CD4-positive, alpha-beta memory T cell (primary cell): ENCODE measurements at regions of chr18 and their contacts with region 1.

Region 1: DNA sequence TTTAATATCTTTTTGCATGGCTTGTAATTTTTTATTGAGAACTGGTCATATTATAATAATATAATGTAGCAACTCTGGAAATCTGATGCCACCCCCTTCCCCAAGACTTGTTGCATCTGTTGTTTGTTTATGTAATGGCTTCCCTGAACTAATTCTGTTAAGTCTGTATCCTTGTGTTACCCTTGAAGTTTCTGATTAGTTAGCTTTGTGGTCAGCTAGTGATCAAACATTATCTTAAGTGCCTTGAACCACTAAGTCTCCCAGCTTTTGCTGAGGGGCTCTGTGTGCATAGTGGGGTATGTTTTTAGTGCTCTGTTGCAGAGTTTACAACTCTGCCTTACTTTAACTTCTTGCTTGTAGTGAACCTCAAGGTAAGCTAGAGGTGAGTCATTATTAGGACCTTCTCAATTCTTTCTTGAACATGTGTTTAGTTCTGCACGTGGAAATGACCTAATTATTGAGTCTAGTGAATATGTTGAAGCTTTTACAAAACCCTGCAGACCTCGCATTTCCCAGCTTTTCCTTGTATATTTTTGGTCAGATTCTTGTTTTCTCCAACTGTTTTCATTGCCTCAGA is 24.8 kb downstream of the SMCHD1 start:
- DNase-seq: no peak
- H3K4me3 ChIP-seq: no peak overlapping the region
- H3K4me3 Mint-ChIP-seq: peak overlapping the region in 5 of 8 donors; percentile 3 to 64 (median 39)
- H3K27ac ChIP-seq: no peak overlapping the region
- H3K27ac Mint-ChIP-seq: peak overlapping the region in 5 of 7 donors; percentile 10 to 78 (median 67)
- H3K4me1 ChIP-seq: peaks cover 69% of the 10 kb centered on the region
- H3K4me1 Mint-ChIP-seq: peaks cover 42 to 75% (median 54%) of the 10 kb centered on the region in 4 donors
- H3K27me3 ChIP-seq: no peaks in the 10 kb centered on the region
- H3K27me3 Mint-ChIP-seq: no peaks in the 10 kb centered on the region

Region 2: DNA sequence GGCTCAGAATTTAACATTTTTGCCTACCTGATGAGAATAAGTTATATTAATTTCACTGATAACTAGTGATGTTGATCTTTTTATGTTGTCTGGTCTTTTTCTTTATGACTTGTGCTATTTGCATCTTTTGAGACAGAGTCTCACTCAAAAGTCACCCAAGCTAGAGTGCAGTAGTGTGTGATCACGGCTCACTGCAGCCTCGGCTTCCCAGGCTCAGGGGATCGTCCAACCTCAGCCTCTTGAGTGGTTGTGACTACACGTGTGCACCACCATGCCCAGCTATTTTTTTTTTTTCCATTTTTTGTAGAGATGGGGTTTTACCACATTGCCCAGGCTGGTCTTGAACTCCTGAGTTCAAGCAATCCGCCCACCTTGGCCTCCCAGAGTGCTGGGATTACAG is 17.3 kb before region 1 on chr18:
- CTCF ChIA-PET with region 1: interaction called, 10 read pairs
- POLR2A ChIA-PET with region 1: interaction called, 59 read pairs
- intact Hi-C with region 1: loop called (anchors 2 kb)
- DNase-seq: no peak
- H3K4me3 ChIP-seq: no peak overlapping the region
- H3K4me3 Mint-ChIP-seq: peak overlapping the region; percentile 57 to 83 (median 72)
- H3K27ac ChIP-seq: no peak overlapping the region
- H3K27ac Mint-ChIP-seq: peak overlapping the region in 5 of 7 donors; percentile 53 to 90 (median 83)
- H3K4me1 ChIP-seq: peaks cover 74% of the 10 kb centered on the region
- H3K4me1 Mint-ChIP-seq: peaks cover 49 to 78% (median 65%) of the 10 kb centered on the region in 4 donors
- H3K27me3 ChIP-seq: no peaks in the 10 kb centered on the region
- H3K27me3 Mint-ChIP-seq: no peaks in the 10 kb centered on the region

Region 3: GRCh38 chr18:2723207-2723606 is 42.9 kb after region 1 on chr18:
- CTCF ChIA-PET with region 1: no interaction called
- POLR2A ChIA-PET with region 1: no interaction called
- intact Hi-C with region 1: loop called (anchors 5 kb)
- DNase-seq: no peak
- H3K4me3 ChIP-seq: no peak overlapping the region
- H3K4me3 Mint-ChIP-seq: no peak overlapping the region
- H3K27ac ChIP-seq: no peak overlapping the region
- H3K27ac Mint-ChIP-seq: peak overlapping the region in 4 of 7 donors; percentile 50 to 77 (median 59)
- H3K4me1 ChIP-seq: peaks cover 9% of the 10 kb centered on the region
- H3K4me1 Mint-ChIP-seq: peaks cover 30 to 55% (median 38%) of the 10 kb centered on the region in 4 donors
- H3K27me3 ChIP-seq: no peaks in the 10 kb centered on the region
- H3K27me3 Mint-ChIP-seq: no peaks in the 10 kb centered on the region

Region 4: DNA sequence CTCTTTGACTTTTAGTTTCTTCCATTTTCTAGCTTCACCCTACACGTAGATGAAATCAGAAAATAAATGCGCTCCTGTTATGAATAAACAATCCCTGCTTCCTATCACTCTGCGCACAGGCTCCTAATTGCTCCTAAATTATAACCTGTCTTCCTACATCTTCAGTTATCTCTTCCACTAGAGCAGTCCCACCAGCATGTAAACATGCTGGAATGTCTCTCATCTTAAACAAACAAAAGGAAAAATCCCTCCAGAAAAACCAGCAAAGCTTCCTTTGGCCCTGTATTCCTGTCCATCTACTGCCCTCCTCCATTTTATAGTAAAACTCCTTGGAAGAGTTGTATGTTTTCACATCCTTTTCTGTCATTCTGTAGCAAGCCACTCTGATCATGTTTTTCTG is 61.3 kb after region 1 on chr18:
- CTCF ChIA-PET with region 1: no interaction called
- POLR2A ChIA-PET with region 1: no interaction called
- intact Hi-C with region 1: no loop called
- DNase-seq: no peak
- H3K4me3 ChIP-seq: no peak overlapping the region
- H3K4me3 Mint-ChIP-seq: no peak overlapping the region
- H3K27ac ChIP-seq: no peak overlapping the region
- H3K27ac Mint-ChIP-seq: peak overlapping the region in 6 of 7 donors; percentile 19 to 77 (median 68)
- H3K4me1 ChIP-seq: no peaks in the 10 kb centered on the region
- H3K4me1 Mint-ChIP-seq: peaks cover 8 to 19% (median 11%) of the 10 kb centered on the region in 4 donors
- H3K27me3 ChIP-seq: no peaks in the 10 kb centered on the region
- H3K27me3 Mint-ChIP-seq: no peaks in the 10 kb centered on the region

Region 5: DNA sequence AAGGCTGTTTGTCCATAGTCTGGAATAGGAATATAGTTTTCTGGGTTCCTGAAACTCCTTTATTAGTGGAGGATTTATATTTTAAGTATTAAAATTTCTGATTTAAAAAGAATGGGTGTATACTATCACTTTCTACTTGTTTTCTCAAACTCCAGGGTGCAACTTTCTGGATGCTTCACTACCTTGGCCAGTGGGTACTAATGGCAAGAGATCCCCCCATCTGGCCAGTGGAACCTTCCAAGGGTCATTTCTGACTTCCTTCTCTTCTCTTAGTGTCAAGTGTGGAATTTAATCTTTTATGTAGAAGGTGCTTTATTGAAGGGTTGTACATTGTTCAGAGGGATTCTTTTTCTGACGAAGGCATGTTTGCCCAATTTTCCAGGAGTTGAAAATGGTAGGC is 419.0 kb after region 1 on chr18:
- CTCF ChIA-PET with region 1: no interaction called
- POLR2A ChIA-PET with region 1: no interaction called
- intact Hi-C with region 1: no loop called
- DNase-seq: no peak
- H3K4me3 ChIP-seq: no peak overlapping the region
- H3K4me3 Mint-ChIP-seq: no peak overlapping the region
- H3K27ac ChIP-seq: no peak overlapping the region
- H3K27ac Mint-ChIP-seq: peak overlapping the region in 1 of 7 donors; percentile 15
- H3K4me1 ChIP-seq: peaks cover 18% of the 10 kb centered on the region
- H3K4me1 Mint-ChIP-seq: peaks cover 12 to 22% (median 18%) of the 10 kb centered on the region in 4 donors
- H3K27me3 ChIP-seq: no peaks in the 10 kb centered on the region
- H3K27me3 Mint-ChIP-seq: peaks cover 0 to 3% of the 10 kb centered on the region in 2 donors